Activated CD4-positive, alpha-beta T cell treated with anti-CD3 and anti-CD28 coated beads for 36 hours (primary cell): ENCODE measurements at regions of chr5 and their contacts with region 1.

Region 1: GRCh38 chr5:56148453-56148971 is 84.6 kb downstream of the ANKRD55 start:
- DNase-seq: peak; percentile 76
- ATAC-seq: peak; percentile 82
- H3K4me3 Mint-ChIP-seq: peak overlapping the region; percentile 41
- H3K27ac Mint-ChIP-seq: peak overlapping the region; percentile 80
- H3K4me1 Mint-ChIP-seq: peaks cover 71% of the 10 kb centered on the region
- H3K27me3 Mint-ChIP-seq: no peaks in the 10 kb centered on the region

Region 2: GRCh38 chr5:56095579-56096102 is 52.9 kb before region 1 on chr5:
- CTCF ChIA-PET with region 1: interaction called, 4 read pairs
- POLR2A ChIA-PET with region 1: interaction called, 5 read pairs
- intact Hi-C with region 1: loop called (anchors 5 kb)
- DNase-seq: no peak
- ATAC-seq: no peak
- H3K4me3 Mint-ChIP-seq: peak overlapping the region; percentile 36
- H3K27ac Mint-ChIP-seq: peak overlapping the region; percentile 84
- H3K4me1 Mint-ChIP-seq: peaks cover 89% of the 10 kb centered on the region
- H3K27me3 Mint-ChIP-seq: no peaks in the 10 kb centered on the region

Region 3: DNA sequence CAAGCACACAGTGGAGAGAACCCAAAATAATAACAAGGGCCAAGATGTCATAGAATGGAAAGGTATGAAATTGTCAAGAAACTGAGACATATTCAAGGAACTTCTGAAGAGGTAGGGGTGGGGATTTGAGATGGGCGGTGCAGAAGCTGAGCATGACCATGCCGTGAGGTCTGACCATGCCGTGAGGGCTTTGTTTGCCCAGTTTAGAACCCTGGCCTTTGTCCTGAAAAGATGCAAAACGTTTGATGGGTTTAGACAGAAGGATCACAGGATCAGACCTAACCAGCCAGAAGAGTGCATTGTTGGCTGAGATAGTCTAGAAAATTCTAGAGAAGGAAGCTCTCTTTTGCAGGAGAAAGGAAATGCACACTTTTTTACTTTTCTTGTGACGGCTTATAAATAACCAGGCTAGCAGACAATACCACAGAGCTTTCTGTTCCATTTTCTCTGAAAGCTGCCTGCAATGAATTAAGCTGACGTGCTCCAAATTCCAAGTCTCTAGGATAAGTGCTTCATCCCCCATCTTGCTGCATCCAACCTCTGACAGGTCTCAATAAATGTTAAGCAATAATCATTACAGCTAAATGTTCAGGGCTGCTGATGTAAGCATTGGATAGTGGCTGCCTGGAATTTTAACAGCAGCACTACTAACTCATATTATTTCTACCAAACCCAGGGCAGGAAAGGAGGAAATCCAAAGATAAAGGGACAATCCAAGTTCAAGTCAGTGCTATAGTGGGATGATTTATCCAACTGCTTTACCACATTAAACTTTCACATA is 42.8 kb before region 1 on chr5:
- CTCF ChIA-PET with region 1: no interaction called
- POLR2A ChIA-PET with region 1: no interaction called
- intact Hi-C with region 1: loop called (anchors 2 to 5 kb)
- DNase-seq: no peak
- ATAC-seq: no peak
- H3K4me3 Mint-ChIP-seq: peak overlapping the region; percentile 53
- H3K27ac Mint-ChIP-seq: peak overlapping the region; percentile 82
- H3K4me1 Mint-ChIP-seq: peaks cover 63% of the 10 kb centered on the region
- H3K27me3 Mint-ChIP-seq: no peaks in the 10 kb centered on the region

Region 4: DNA sequence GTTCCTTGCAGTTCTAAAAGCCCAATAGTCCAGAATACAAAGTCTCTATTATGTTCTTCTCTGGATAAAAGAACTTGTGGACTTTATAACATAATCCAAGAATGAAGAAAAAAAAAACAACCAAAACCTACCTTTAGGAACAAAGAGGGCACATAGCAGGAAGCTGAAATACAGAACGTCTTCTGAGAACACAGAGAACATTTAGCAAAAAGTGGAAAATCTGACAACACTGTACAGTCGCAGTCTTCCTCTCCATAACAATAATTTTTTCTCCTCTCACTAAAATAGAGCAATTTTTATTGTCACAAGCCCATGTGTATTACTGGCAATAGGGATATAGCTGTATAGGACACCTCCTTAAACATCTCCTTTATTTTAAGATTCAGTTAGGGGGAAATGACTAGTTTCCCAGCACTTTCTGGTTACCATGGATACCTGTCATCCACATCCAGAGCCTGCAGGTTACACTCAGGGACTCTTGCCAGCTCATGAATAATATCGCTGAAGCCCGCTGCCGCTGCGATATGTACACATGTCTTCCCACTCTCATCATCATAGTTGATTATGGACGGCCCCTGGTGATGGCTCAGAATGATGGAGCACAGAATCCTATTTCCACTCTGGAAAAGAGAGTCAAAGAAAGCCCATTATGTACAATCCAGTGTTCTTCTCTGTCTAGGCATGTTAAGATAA is 21.9 kb before region 1 on chr5:
- CTCF ChIA-PET with region 1: interaction called, 14 read pairs
- POLR2A ChIA-PET with region 1: no interaction called
- intact Hi-C with region 1: loop called (anchors 2 kb)
- DNase-seq: peak; percentile 66
- ATAC-seq: peak; percentile 70
- H3K4me3 Mint-ChIP-seq: peak overlapping the region; percentile 63
- H3K27ac Mint-ChIP-seq: peak overlapping the region; percentile 95
- H3K4me1 Mint-ChIP-seq: peaks cover 57% of the 10 kb centered on the region
- H3K27me3 Mint-ChIP-seq: no peaks in the 10 kb centered on the region